Sciatic nerve (tissue), 2 donors: ENCODE measurements at regions of chr4 and their contacts with region 1.

Region 1: GRCh38 chr4:76758290-76758882 is 139.6 kb downstream of the SOWAHB start:
- DNase-seq: no peak
- ATAC-seq: peak; percentile 70

Region 2: DNA sequence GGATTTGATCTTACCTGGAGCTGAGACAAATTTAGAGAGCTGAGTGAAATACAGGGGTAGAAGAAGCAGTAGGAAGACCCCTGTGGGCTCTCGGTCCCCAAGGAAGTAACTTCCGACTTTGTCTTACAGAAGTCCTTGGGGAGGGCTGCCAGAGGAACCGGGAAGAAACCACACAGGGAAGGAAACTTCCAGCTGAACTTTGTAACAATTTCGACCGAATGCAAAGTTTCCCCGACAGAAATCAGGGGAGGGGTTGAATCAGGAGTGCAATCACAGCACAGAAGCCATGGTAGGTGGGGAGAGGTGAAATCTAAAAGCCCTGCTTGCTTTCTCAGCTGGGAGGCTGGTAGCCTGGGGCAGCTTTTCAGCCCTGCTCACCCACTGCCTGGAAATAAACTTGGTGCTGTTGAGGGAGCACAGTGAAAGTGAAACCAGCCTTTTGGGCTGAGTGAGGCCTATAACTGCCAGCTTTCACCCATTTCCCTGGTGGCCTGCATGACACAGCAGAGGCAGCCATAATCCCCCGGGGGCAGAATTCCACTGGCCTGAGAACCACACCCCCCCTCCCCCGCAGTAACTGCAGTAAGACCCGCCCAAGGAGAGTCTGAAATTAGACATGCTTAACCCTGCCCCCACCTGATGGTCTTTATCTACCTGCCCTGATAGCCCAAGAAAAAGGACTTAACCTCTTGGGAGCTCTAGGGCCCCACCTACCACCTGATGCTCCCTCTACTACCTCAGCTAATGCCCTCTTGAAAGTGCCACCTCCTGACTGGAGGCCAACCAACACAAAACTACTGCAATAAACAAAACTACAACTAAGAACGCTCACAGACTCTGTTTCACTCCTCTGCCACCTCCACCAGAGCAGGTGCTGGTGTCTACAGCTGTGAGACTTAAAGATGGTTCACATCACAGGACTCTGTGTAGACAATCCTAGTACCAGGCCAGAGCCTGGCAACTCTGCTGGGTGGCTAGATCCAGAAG is 1577.3 kb before region 1 on chr4:
- intact Hi-C with region 1: no loop called
- DNase-seq: no peak
- ATAC-seq: no peak

Region 3: DNA sequence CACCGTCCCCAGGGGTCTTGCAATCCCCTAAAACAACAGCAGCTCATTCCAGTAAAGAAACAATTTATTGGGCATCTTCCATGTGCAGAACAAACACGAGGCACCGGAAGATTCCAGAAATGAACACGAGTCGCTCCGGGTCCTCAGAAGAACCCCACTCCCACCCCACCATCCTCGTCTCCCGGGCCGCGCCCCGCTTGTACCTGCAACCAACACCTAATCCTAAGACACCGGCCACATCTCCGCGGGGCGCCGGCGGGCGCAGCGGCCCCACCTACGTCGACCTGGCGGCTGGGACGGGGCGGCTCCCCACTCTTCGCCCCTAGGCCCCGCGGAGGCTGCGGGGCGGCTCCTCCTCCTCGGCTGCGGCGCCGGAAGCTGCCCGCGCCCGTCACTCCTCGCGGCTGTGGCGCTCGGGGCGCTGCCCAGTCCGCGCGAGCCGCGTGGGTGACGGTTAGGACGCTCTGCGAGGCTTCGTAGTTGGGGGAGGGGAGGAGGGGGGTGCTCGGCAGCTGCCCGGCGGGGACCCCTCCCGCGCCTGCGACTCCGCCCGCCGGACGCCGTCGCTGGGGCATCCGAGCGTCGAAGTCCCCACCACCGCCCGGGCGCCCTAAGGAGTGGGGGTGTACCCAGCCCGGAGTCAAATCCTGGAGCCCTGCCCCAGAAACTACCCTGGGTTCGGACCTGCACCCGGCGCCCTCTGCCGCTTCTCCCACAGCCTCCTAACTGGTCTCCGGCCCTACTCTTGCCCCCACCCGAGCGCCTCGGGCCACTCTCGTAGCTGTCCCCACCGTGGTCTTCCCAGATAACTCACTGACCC is 337.4 kb before region 1 on chr4 and contains the start of gene CCDC158:
- intact Hi-C with region 1: loop called (anchors 10 kb)
- DNase-seq: no peak
- ATAC-seq: peak; percentile 84
- total RNA-seq, gene CCDC158: 1.9 TPM

Region 4: GRCh38 chr4:76526585-76526990 is 231.8 kb before region 1 on chr4:
- intact Hi-C with region 1: loop called (anchors 10 kb)
- DNase-seq: no peak
- ATAC-seq: no peak